Calu3 (cell line): ENCODE measurements at regions of chr3 and their contacts with region 1.

Region 1: GRCh38 chr3:51099794-51100535 is 285.1 kb upstream of the MANF start:
- DNase-seq: peak; percentile 74
- H3K4me3 Mint-ChIP-seq: no peak overlapping the region
- H3K27ac Mint-ChIP-seq: no peak overlapping the region
- H3K4me1 Mint-ChIP-seq: no peaks in the 10 kb centered on the region
- H3K27me3 Mint-ChIP-seq: peaks cover 53% of the 10 kb centered on the region
- CTCF ChIP-seq: peak; percentile 54

Region 2: DNA sequence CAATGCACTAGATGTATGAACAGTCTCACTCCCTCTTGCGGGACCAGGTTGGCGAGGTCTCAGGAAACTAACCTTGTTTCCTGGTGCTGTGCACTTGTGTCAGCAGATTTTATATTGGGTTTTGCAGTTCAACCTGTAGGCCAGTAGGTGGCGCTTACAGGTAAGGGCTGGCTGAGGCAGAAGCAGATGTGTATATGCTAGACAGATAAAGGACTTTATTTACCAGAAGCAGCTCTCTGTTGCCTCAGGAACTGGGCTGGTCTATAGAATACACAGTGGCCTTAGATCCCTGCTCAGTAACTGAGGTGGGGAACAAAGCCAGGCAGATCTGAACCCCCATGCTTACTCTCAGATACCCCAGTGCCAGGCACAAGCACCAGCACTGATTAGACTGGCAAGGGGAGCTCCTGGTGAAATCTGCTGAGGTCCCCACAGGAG is 128.5 kb before region 1 on chr3:
- CTCF ChIA-PET with region 1: interaction called, 4 read pairs
- intact Hi-C with region 1: loop called (anchors 5 kb)
- DNase-seq: peak; percentile 63
- H3K4me3 Mint-ChIP-seq: no peak overlapping the region
- H3K27ac Mint-ChIP-seq: no peak overlapping the region
- H3K4me1 Mint-ChIP-seq: no peaks in the 10 kb centered on the region
- H3K27me3 Mint-ChIP-seq: no peaks in the 10 kb centered on the region
- CTCF ChIP-seq: peak; percentile 47

Region 3: GRCh38 chr3:51190199-51190839 is 90.4 kb after region 1 on chr3:
- CTCF ChIA-PET with region 1: no interaction called
- intact Hi-C with region 1: loop called (anchors 10 kb)
- DNase-seq: no peak
- H3K4me3 Mint-ChIP-seq: no peak overlapping the region
- H3K27ac Mint-ChIP-seq: no peak overlapping the region
- H3K4me1 Mint-ChIP-seq: no peaks in the 10 kb centered on the region
- H3K27me3 Mint-ChIP-seq: peaks cover 70% of the 10 kb centered on the region
- CTCF ChIP-seq: no peak

Region 4: DNA sequence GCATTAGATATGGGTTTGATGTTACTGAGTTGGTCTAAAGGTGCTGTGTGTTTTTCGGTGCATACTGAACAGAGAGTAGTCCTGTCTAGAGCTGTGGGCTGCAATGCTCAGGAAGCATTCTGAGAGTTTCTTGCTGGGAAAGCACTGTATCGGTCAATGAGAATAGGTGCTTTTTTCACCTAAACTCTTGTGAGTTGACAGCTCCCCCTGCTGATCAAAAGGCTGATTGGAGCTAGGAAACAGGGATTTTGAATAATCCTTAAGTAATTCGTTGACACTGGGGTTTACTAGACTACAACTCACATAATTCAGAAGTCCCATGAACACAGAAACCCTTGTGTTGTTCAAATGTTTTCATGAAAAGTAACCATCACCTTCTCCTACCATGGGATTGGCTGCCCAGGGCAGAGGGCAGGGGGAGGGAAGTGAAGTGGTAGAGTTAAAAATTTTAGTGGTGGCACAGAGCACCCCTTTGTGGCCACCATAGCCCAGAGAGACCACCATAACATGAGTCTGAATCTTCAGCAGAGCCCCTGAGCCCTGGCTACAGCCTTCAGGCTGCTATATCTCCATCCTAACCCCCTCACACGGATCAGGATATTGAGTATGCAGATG is 272.1 kb after region 1 on chr3:
- CTCF ChIA-PET with region 1: interaction called, 36 read pairs
- intact Hi-C with region 1: loop called (anchors 1 kb)
- DNase-seq: peak; percentile 71
- H3K4me3 Mint-ChIP-seq: no peak overlapping the region
- H3K27ac Mint-ChIP-seq: no peak overlapping the region
- H3K4me1 Mint-ChIP-seq: no peaks in the 10 kb centered on the region
- H3K27me3 Mint-ChIP-seq: peaks cover 83% of the 10 kb centered on the region
- CTCF ChIP-seq: no peak